ENCODE measurements at regions of chr3 and their contacts with region 1.

Region 1: GRCh38 chr3:182258538-182259177 is 534.6 kb upstream of the ATP11B start:
- DNase-seq: peak; percentile 28
- ATAC-seq: peak; percentile 78
- H3K4me3 ChIP-seq: no peak overlapping the region
- H3K27ac ChIP-seq: no peak overlapping the region
- H3K4me1 ChIP-seq: no peaks in the 10 kb centered on the region
- H3K27me3 ChIP-seq: 0 out of 2 replicates have a peak, but pooled peaks cover under 1% of the 10 kb centered on the region
- CTCF ChIP-seq: peak; percentile 81; the same call in 1 of the 2 replicates

Region 2: DNA sequence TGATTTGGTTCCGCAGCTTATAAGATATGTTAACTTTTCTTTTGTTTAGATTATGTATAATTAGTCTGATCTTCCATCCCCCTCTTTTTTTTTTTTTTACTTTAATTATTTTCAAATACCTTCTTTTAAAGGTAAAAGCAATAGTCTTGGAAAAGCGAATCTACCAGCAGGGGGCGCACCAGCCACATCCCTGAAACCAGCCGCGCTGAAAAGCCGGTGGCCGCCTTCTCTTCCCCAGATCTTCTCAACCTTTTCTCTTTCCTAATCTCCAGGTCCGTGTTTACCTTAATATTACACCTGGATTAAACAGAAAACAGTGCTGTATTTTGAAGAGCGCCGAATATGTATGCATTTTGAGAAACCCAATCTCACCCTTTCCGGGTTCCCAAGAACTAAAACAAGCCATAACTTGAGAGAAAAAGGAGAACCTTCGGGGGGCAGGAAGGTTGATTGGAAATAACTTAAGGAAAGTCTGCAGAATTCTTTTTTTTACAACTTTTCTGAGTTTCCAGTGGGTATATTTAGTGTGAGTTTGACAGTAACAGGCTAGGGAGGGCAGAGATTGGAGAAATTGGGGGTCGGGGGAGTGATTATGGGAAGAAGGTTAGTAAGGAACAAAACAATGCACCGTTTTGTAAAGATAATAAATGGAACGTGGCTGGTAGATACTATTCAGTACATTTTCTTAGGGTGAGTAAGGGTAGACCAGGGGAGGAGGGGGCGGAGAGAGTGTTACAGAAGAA is 549.0 kb before region 1 on chr3:
- CTCF ChIA-PET with region 1: no interaction called
- POLR2A ChIA-PET with region 1: no interaction called
- in situ Hi-C with region 1: no loop called
- intact Hi-C with region 1: loop called (anchors 1 kb)
- DNase-seq: no peak
- ATAC-seq: no peak
- H3K4me3 ChIP-seq: peak overlapping the region in 1 of 2 experiments; percentile 34; a peak in 2 of 4 replicates
- H3K27ac ChIP-seq: no peak overlapping the region
- H3K4me1 ChIP-seq: peaks cover 4% of the 10 kb centered on the region; the same call in 1 of the 2 replicates
- H3K27me3 ChIP-seq: peaks cover 40% of the 10 kb centered on the region
- CTCF ChIP-seq: peak; percentile 95

Region 3: GRCh38 chr3:181966005-181966792 is 292.5 kb before region 1 on chr3:
- CTCF ChIA-PET with region 1: no interaction called
- POLR2A ChIA-PET with region 1: no interaction called
- in situ Hi-C with region 1: no loop called
- intact Hi-C with region 1: loop called (anchors 5 kb)
- DNase-seq: no peak
- ATAC-seq: no peak
- H3K4me3 ChIP-seq: no peak overlapping the region
- H3K27ac ChIP-seq: no peak overlapping the region
- H3K4me1 ChIP-seq: no peaks in the 10 kb centered on the region
- H3K27me3 ChIP-seq: no peaks in the 10 kb centered on the region
- CTCF ChIP-seq: no peak

Region 4: DNA sequence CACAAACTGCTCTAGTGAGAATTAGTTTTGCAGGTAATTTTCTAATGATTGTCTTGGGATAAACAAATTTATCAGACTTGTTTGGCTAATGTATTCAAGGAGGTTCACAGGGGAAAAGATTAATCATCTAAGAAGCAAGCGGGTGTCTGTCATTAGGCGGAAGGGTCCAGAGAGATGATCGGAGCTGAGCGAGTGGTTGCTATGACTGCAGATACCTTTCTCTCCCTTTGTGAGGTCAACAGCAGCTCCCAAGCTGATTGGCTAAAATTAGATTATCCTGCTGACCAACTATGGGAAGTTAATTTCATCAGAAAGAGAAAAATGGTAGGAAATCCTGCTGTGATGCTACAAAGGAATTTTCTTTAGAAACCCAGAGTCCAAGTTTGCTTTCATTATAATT is 270.9 kb before region 1 on chr3:
- CTCF ChIA-PET with region 1: no interaction called
- POLR2A ChIA-PET with region 1: no interaction called
- in situ Hi-C with region 1: no loop called
- intact Hi-C with region 1: no loop called
- DNase-seq: no peak
- ATAC-seq: no peak
- H3K4me3 ChIP-seq: no peak overlapping the region
- H3K27ac ChIP-seq: no peak overlapping the region
- H3K4me1 ChIP-seq: no peaks in the 10 kb centered on the region
- H3K27me3 ChIP-seq: no peaks in the 10 kb centered on the region
- CTCF ChIP-seq: no peak

Region 5: GRCh38 chr3:182201456-182202168 is 57.0 kb before region 1 on chr3:
- CTCF ChIA-PET with region 1: no interaction called
- POLR2A ChIA-PET with region 1: no interaction called
- in situ Hi-C with region 1: no loop called
- intact Hi-C with region 1: no loop called
- DNase-seq: no peak
- ATAC-seq: no peak
- H3K4me3 ChIP-seq: no peak overlapping the region
- H3K27ac ChIP-seq: no peak overlapping the region
- H3K4me1 ChIP-seq: no peaks in the 10 kb centered on the region
- H3K27me3 ChIP-seq: no peaks in the 10 kb centered on the region
- CTCF ChIP-seq: no peak

Region 6: DNA sequence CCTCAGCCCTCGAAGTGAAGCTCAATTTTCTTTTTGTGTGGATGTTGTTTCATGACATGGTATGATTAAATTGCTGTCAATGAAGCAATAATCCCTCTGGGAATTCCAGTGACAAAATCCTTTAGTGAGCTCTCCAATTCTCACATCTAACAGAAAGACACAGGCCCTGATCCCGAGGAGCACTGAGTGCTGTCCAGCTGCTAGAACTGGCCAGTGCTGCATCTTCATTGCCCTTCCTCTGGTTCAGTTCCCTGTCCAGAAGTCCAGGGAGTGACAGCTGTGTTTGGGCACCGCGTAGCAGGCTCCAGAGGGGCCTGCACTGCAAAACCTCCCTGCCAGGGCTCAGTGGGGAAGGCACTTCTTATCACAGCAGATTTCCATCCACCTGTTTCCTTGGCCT is 17.9 kb after region 1 on chr3:
- CTCF ChIA-PET with region 1: no interaction called
- POLR2A ChIA-PET with region 1: no interaction called
- in situ Hi-C with region 1: no loop called
- intact Hi-C with region 1: no loop called
- DNase-seq: no peak
- ATAC-seq: no peak
- H3K4me3 ChIP-seq: no peak overlapping the region
- H3K27ac ChIP-seq: no peak overlapping the region
- H3K4me1 ChIP-seq: no peaks in the 10 kb centered on the region
- H3K27me3 ChIP-seq: peaks cover 2% of the 10 kb centered on the region; the same call in 1 of the 2 replicates
- CTCF ChIP-seq: no peak

Region 7: GRCh38 chr3:183158551-183159006 is 899.9 kb after region 1 on chr3:
- CTCF ChIA-PET with region 1: no interaction called
- POLR2A ChIA-PET with region 1: no interaction called
- in situ Hi-C with region 1: no loop called
- intact Hi-C with region 1: no loop called
- DNase-seq: no peak
- ATAC-seq: no peak
- H3K4me3 ChIP-seq: no peak overlapping the region
- H3K27ac ChIP-seq: no peak overlapping the region
- H3K4me1 ChIP-seq: no peaks in the 10 kb centered on the region
- H3K27me3 ChIP-seq: peaks cover 2% of the 10 kb centered on the region; the same call in 1 of the 2 replicates
- CTCF ChIP-seq: no peak

Measured in Panc1 (cell line).